Breast epithelium (tissue), 4 donors: ENCODE measurements at regions of chr11 and their contacts with region 1.

Region 1: GRCh38 chr11:86193297-86194095 is 51.1 kb upstream of the EED start:
- DNase-seq: peak in 1 of 2 donors; percentile 57
- H3K4me3 ChIP-seq: peak overlapping the region in 2 of 3 donors; percentile 20 to 39
- H3K27ac ChIP-seq: peak overlapping the region; percentile 46 to 62
- H3K4me1 ChIP-seq: no peaks in the 10 kb centered on the region
- H3K27me3 ChIP-seq: no peaks in the 10 kb centered on the region
- CTCF ChIP-seq: peak; percentile 37 to 74 (median 65)
- POLR2A ChIP-seq: no peak

Region 2: DNA sequence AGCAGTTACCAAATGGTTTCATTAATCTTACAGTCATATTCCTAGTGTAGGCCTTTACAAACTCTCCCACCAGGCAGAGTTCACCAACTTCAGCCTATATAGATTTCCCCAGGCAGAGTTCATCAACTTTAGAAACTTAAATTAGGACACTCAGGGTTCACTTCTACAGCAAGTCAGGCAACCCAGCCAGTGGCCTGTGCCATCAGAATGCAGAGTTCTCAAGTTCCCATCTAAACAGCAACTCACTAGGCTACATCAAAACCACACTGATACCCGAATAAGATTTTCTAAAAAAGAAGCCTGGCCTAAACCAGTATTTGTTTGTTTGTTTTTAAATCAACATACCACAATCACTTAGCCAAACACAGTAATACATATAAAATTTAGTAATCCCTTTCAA is 158.3 kb before region 1 on chr11:
- intact Hi-C with region 1: loop called (anchors 10 kb)
- DNase-seq: no peak
- H3K4me3 ChIP-seq: no peak overlapping the region
- H3K27ac ChIP-seq: no peak overlapping the region
- H3K4me1 ChIP-seq: no peaks in the 10 kb centered on the region
- H3K27me3 ChIP-seq: no peaks in the 10 kb centered on the region
- CTCF ChIP-seq: no peak
- POLR2A ChIP-seq: no peak

Region 3: GRCh38 chr11:86218125-86219084 is 24.9 kb after region 1 on chr11:
- intact Hi-C with region 1: no loop called
- DNase-seq: peak in 1 of 2 donors; percentile 64
- H3K4me3 ChIP-seq: peak overlapping the region in 2 of 3 donors; percentile 13 to 48
- H3K27ac ChIP-seq: no peak overlapping the region
- H3K4me1 ChIP-seq: no peaks in the 10 kb centered on the region
- H3K27me3 ChIP-seq: no peaks in the 10 kb centered on the region
- CTCF ChIP-seq: peak in 2 of 3 donors; percentile 65 to 77
- POLR2A ChIP-seq: no peak